Posterior vena cava (tissue), 2 donors: ENCODE measurements at regions of chr7 and their contacts with region 1.

Region 1: DNA sequence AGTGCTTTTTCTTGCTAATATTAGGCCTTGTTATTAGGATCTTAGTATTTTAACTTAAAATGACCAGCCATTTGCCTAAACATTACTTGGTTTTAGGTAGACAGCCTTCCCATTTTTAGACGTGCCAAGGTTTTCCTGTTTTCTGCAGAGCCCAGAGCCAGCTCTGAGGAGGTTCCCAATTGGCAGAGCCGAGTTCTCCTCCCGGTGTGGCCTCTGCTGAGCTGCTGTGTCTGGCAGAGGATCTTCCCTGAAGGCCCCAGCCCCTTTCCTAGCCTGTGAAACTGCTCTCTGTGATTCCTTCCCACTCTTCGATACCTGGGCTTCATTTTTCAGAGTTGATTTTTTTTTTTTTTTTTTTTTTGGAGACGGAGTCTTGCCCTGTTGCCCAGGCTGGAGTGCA is 91.4 kb downstream of the EEPD1 start:
- DNase-seq: no peak

Region 2: GRCh38 chr7:35286422-35286821 is 958.0 kb before region 1 on chr7:
- intact Hi-C with region 1: no loop called
- DNase-seq: no peak

Region 3: GRCh38 chr7:36084475-36085097 is 159.8 kb before region 1 on chr7:
- intact Hi-C with region 1: no loop called
- DNase-seq: no peak

Region 4: DNA sequence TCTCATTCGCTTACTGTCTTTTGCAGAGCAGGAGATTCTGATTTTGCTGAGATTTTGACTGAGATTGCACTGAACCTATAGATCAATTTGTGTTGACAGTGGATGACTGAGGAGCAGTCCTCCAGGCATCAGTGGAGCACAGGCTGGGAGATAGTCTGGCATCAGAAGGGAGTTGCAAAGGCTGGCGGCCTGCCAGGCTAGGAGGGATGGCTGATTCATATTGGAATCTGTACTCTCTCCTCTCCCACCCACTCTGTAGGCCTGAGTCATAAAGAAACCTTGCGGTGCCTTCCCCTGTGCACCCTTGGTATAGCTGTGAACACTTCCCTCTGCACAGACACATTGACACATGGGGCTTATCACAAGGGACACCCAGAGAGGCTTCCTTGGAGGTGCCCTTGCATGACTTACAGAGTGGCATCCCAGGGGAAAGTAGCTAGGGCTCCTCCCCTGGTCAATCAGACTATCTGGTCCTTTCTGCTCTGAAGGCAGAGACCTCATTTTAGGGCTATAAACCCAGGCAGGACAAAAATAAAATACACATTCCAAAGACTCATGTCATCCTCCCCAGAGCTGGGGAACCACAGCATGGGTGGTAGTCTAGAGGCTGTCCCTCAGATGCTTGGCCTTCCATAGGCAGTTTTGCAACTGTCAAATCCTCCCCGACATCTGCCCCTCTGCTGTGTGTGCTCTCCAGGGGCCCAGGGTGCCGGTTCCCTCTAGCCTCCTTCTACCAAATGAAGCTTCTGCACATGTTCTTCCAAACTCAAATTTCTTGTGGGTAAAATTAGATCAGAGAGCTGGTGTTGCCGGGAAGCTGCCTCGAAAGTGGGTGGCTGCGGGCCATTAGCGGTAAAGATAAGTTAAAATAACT is 128.7 kb before region 1 on chr7:
- intact Hi-C with region 1: no loop called
- DNase-seq: peak; percentile 94

Region 5: DNA sequence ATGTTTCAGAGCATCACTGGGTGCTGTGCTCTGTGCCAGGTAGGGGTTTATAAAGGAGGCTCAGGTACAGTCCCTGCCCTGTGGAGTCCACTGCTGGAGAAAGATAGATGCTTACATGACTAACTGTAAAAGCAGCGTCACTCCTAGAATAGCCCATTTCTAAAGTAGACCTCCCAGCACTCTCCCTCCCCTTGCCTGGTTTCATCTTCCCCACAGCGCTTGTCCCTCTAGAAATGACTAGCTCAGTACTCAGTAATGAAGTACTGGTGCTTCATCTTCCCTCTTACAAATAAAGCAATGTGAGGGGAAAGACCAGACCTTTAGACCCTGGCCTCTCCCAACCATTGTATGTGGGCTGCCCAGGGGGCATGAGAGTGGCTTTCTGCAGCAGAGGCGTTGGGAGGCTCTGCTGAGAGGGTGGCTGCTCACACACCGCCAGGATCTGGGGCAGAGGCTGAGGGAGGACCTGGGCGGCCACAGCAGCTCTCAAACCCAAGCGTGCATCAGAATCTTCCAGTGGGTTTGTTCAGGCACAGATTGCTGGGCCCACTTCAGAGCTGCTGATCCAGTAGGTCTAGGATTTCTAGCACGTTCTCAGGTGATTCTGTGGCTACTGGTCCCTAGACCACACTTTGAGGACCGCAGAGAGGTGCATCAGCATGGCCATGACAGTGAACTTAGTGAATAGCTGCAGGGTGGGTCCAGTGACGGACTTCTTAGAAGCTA is 34.9 kb after region 1 on chr7:
- intact Hi-C with region 1: loop called in 1 of 2 experiments (anchors 5 kb)
- DNase-seq: no peak

Region 6: DNA sequence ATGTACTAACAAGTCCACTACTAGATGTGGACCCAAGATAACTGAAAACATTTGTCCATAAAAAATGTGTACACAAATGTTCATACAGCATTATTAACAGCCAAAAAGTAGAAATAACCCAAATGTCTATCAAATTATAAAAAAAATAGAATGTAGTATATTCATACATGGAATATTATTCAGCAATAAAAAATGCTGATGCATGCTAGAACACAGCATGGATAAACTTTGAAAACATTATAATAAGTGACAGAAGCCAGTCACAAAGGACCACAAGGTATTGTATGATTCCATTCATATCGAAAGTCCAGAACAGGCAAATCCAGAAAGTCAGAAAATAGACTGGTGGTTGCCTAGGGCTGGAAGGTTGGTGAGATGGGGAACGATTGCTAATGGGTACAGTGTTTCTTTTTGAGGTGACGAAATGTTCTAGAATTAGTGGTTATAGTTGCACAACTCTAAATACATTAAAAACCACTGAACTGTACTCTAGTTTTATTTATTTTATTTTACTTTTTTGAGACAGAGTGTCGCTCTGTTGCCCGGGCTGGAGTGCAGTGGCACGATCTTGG is 101.9 kb after region 1 on chr7:
- intact Hi-C with region 1: no loop called
- DNase-seq: no peak